ENCODE measurements at regions of chr15 and their contacts with region 1.

Region 1: GRCh38 chr15:97929456-97929855 is 31.0 kb upstream of the ARRDC4 start:
- DNase-seq: no peak
- ATAC-seq: no peak
- H3K4me3 ChIP-seq: no peak overlapping the region
- H3K27ac ChIP-seq: no peak overlapping the region
- H3K4me1 ChIP-seq: no peaks in the 10 kb centered on the region
- H3K27me3 ChIP-seq: no peaks in the 10 kb centered on the region
- CTCF ChIP-seq: no peak
- POLR2A ChIP-seq: no peak
- RAD21 ChIP-seq: no peak

Region 2: DNA sequence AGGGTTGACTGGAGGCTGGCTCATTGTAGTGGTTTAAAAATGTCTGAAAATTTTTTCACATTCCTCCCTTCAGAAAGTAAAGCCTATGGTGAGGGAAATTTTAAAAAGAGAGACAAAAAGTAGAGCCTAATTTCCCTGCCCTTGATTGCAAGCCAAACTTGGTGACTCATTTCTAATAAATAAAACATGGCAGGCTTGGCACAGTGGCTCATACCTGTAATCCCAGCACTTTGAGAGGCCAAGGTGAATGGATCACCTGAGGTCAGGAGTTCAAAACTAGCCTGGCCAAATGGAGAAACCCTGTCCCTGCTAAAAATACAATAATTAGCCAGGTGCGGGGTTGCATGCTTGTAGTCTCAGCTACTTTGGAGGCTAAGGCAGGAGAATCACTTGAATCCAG is 12.1 kb after region 1 on chr15:
- CTCF ChIA-PET with region 1: no interaction called
- POLR2A ChIA-PET with region 1: no interaction called
- RAD21 ChIA-PET with region 1: no interaction called
- intact Hi-C with region 1: loop called (anchors 1 kb)
- DNase-seq: no peak
- ATAC-seq: no peak
- H3K4me3 ChIP-seq: no peak overlapping the region
- H3K27ac ChIP-seq: no peak overlapping the region
- H3K4me1 ChIP-seq: no peaks in the 10 kb centered on the region
- H3K27me3 ChIP-seq: no peaks in the 10 kb centered on the region
- CTCF ChIP-seq: no peak
- POLR2A ChIP-seq: no peak
- RAD21 ChIP-seq: no peak

Measured in HCT116 (cell line).